GM12878 (cell line): ENCODE measurements at regions of chr17 and their contacts with region 1.

Region 1: GRCh38 chr17:78186692-78187595 is at the starts of genes AFMID and TK1:
- DNase-seq: peak; percentile 87
- ATAC-seq: peak; percentile 95
- H3K4me3 ChIP-seq: peak within 1 kb of the TSS; percentile 96
- H3K27ac ChIP-seq: peak within 1 kb of the TSS; percentile 71
- H3K4me1 ChIP-seq: peaks cover 5% of the 10 kb centered on the region; the same call in 1 of the 2 replicates
- H3K27me3 ChIP-seq: no peaks in the 10 kb centered on the region
- CTCF ChIP-seq: peak; percentile 27 to 56 (median 37); a peak in 3 of 6 replicates
- EP300 ChIP-seq: no peak
- POLR2A ChIP-seq: peak; percentile 94
- RAD21 ChIP-seq: no peak
- polyA plus RNA-seq, gene AFMID: 50.3 to 98.8 TPM
- polyA plus RNA-seq, gene TK1: 4.6 to 13.0 TPM

Region 2: GRCh38 chr17:78214706-78215061 is 27.7 kb after region 1 on chr17:
- CTCF ChIA-PET with region 1: no interaction called
- POLR2A ChIA-PET with region 1: interaction called, 3 read pairs
- RAD21 ChIA-PET with region 1: no interaction called
- SMC1A ChIA-PET with region 1: no interaction called
- in situ Hi-C with region 1: no loop called
- intact Hi-C with region 1: loop called (anchors 2 kb)
- DNase-seq: no peak
- ATAC-seq: peak; percentile 6; the same call in 1 of the 3 replicates
- H3K4me3 ChIP-seq: peak overlapping the region; percentile 83
- H3K27ac ChIP-seq: peak overlapping the region; percentile 84
- H3K4me1 ChIP-seq: peaks cover 3% of the 10 kb centered on the region; the same call in 1 of the 2 replicates
- H3K27me3 ChIP-seq: no peaks in the 10 kb centered on the region
- CTCF ChIP-seq: no peak
- EP300 ChIP-seq: no peak
- POLR2A ChIP-seq: no peak
- RAD21 ChIP-seq: no peak

Region 3: GRCh38 chr17:78258323-78259191 is 71.6 kb after region 1 on chr17:
- CTCF ChIA-PET with region 1: no interaction called
- POLR2A ChIA-PET with region 1: interaction called, 10 read pairs
- RAD21 ChIA-PET with region 1: interaction called, 3 read pairs
- SMC1A ChIA-PET with region 1: interaction called, 3 read pairs
- in situ Hi-C with region 1: no loop called
- intact Hi-C with region 1: loop called (anchors 5 kb)
- DNase-seq: no peak
- ATAC-seq: no peak
- H3K4me3 ChIP-seq: peak overlapping the region; percentile 5
- H3K27ac ChIP-seq: no peak overlapping the region
- H3K4me1 ChIP-seq: peaks cover 35% of the 10 kb centered on the region
- H3K27me3 ChIP-seq: no peaks in the 10 kb centered on the region
- CTCF ChIP-seq: no peak
- EP300 ChIP-seq: no peak
- POLR2A ChIP-seq: no peak; the same call in 1 of the 2 replicates
- RAD21 ChIP-seq: no peak